ENCODE measurements at regions of chr1 and their contacts with region 1.

Region 1: DNA sequence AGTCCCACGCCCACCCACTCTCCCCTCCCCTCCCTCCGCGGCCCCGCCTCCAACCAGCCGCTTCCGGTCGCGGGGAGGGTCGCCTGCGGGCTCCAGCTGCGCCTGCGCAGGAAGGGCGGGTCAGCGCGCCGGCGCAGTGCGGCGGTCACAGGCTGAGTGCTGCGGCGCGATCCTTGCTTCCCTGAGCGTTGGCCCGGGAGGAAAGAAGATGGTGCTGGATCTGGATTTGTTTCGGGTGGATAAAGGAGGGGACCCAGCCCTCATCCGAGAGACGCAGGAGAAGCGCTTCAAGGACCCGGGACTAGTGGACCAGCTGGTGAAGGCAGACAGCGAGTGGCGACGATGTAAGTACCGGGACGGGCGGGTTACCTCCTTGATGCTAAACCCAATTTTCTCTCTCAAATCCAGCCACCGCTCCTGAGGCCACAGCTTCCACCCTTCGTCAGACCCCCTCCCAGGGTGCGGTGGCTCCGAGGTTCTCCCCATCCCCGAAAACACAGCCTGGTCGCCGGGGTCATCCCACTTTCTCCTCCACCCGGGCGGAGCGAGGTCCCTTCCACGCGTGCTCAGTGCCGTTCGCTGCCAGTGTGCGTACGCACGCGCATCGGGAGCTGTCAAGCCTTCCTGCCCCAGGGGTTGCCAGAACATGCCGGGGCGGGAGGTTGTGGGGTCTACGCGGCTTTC is at the start of gene SARS1:
- DNase-seq: peak; percentile 90
- H3K4me3 Mint-ChIP-seq: peak within 1 kb of the TSS; percentile 100
- H3K27ac Mint-ChIP-seq: peak within 1 kb of the TSS; percentile 100
- H3K4me1 Mint-ChIP-seq: peaks cover 24% of the 10 kb centered on the region
- H3K27me3 Mint-ChIP-seq: no peaks in the 10 kb centered on the region
- total RNA-seq, gene SARS1: 363 TPM

Region 2: GRCh38 chr1:108963052-108963686 is 250.8 kb before region 1 on chr1 and contains the start of gene CLCC1:
- CTCF ChIA-PET with region 1: no interaction called
- intact Hi-C with region 1: loop called (anchors 1 kb)
- DNase-seq: peak; percentile 96
- H3K4me3 Mint-ChIP-seq: peak within 1 kb of the TSS; percentile 88
- H3K27ac Mint-ChIP-seq: peak within 1 kb of the TSS; percentile 87
- H3K4me1 Mint-ChIP-seq: peaks cover 26% of the 10 kb centered on the region
- H3K27me3 Mint-ChIP-seq: no peaks in the 10 kb centered on the region
- total RNA-seq, gene CLCC1: 14.3 to 15.2 TPM

Region 3: DNA sequence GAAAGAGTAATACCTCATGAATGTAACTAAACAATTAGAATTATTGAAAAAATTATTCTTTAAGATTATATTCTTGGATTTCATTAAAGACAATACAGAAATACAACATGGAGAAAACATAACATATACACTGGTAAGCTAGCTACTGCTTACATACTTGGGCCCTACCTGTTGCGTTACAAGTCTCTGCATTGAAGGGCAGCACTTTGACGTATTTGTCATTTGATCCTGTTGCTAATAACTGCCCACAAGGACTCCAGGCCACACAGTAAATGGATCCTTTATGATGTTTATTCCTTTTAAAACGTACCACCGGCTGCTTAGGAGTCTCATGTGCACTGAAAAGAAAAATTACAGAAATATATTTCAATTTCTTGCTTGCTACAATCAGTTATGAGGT is 230.8 kb before region 1 on chr1:
- CTCF ChIA-PET with region 1: no interaction called
- intact Hi-C with region 1: no loop called
- DNase-seq: no peak
- H3K4me3 Mint-ChIP-seq: no peak overlapping the region
- H3K27ac Mint-ChIP-seq: no peak overlapping the region
- H3K4me1 Mint-ChIP-seq: no peaks in the 10 kb centered on the region
- H3K27me3 Mint-ChIP-seq: no peaks in the 10 kb centered on the region

Region 4: DNA sequence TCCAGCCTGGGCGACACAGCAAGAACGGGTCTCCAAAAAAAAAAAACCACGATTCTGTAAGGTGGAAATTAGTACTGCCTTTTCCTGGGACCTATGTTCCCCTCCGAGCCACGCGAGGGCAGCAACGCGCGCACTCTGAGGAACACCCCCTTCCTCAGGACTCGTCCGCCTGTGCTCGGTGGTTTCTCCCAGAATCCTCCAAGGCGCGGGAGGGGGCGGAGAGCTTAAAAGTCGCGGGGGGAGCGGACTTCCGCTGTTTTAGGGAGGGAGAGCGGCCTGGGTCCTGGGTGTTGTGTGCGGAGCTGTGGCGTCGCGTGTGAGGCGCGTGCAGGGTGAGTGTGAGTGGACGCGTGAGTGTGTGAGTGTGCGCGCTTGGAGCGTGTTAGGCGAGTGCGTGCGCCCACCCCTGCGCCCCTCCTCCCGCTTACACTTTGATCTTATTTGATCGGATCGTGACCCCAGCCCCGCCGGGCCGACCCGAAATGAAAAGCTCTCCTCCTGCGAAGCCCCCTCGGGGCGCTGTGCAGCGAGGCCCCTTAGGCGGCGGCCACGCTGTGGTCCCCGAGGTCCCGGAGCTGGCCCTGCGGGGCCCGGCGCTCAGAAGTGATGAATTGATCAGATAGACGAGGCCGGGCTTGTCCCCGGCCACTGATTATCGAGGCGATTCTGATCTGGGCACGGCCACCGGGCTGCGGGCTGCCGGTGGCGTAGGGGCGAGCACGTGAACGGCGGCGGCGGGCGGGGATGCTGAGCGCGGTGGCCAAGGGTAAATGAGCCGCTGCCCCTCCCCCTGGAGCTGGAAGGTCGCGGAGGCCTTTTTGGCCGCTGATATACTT is 113.8 kb before region 1 on chr1:
- CTCF ChIA-PET with region 1: interaction called, 5 read pairs
- intact Hi-C with region 1: loop called (anchors 1 kb)
- DNase-seq: peak; percentile 98
- H3K4me3 Mint-ChIP-seq: peak overlapping the region; percentile 99
- H3K27ac Mint-ChIP-seq: peak overlapping the region; percentile 97
- H3K4me1 Mint-ChIP-seq: peaks cover 23% of the 10 kb centered on the region
- H3K27me3 Mint-ChIP-seq: peaks cover 2% of the 10 kb centered on the region

Region 5: GRCh38 chr1:109181105-109181806 is 32.7 kb before region 1 on chr1:
- CTCF ChIA-PET with region 1: no interaction called
- intact Hi-C with region 1: no loop called
- DNase-seq: no peak
- H3K4me3 Mint-ChIP-seq: no peak overlapping the region
- H3K27ac Mint-ChIP-seq: no peak overlapping the region
- H3K4me1 Mint-ChIP-seq: no peaks in the 10 kb centered on the region
- H3K27me3 Mint-ChIP-seq: no peaks in the 10 kb centered on the region

Region 6: GRCh38 chr1:109239580-109240095 is 25.7 kb after region 1 on chr1:
- CTCF ChIA-PET with region 1: interaction called, 3 read pairs
- intact Hi-C with region 1: loop called (anchors 2 kb)
- DNase-seq: peak; percentile 47
- H3K4me3 Mint-ChIP-seq: no peak overlapping the region
- H3K27ac Mint-ChIP-seq: peak overlapping the region; percentile 10
- H3K4me1 Mint-ChIP-seq: peaks cover 17% of the 10 kb centered on the region
- H3K27me3 Mint-ChIP-seq: peaks cover 2% of the 10 kb centered on the region

Region 7: DNA sequence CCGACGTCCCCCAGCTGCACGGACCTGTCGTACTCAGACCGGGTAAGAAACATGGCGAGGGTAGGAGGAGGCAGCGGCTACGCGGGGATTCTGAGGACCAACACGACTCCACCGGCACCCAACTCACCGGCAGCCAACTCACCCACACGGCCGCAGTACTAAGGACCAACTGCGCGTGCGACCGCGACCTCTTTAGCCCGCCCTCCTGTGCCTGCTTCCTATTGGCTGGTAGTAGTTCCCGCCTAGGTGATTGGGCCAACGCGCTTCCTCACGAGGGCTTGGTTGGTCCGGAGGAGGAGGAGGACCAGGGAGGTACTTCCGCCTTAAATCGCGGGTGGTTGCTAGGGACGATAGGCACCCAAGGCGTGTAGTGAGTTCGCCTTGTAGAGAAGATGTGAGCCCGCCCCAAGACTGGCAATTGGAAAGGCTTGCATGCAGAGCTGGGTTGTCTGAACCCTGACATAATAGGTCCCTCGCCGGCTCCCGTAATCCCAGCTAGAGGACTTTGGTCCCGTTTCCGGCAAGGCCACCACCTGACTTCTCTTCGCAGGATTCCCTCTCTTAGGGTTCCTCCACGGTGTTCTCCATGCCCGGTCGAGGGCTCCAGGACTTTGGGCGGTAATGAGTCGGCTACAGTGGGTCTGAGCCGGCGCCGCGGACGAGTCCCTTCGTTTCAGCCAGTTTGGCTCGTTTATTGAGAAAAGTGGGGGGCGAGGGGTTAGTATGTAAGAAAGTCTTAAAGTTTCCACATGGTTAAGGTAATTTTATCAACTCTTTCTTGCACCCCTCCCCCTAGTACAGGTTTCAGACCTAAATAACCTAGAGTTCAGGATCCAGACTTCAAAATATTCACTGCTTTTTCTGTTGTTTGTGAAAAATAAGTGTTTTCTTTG is 212.6 kb after region 1 on chr1 and contains the start of gene PSMA5:
- CTCF ChIA-PET with region 1: no interaction called
- intact Hi-C with region 1: loop called (anchors 1 kb)
- DNase-seq: peak; percentile 98
- H3K4me3 Mint-ChIP-seq: peak within 1 kb of the TSS; percentile 94
- H3K27ac Mint-ChIP-seq: peak within 1 kb of the TSS; percentile 97
- H3K4me1 Mint-ChIP-seq: peaks cover 33% of the 10 kb centered on the region
- H3K27me3 Mint-ChIP-seq: no peaks in the 10 kb centered on the region
- total RNA-seq, gene PSMA5: 181 to 202 TPM

Measured in activated naive CD4-positive, alpha-beta T cell treated with anti-CD3 and anti-CD28 coated beads for 36 hours (primary cell).